Activated B cell treated with CpG ODN at 0.5 μM for 24 hours (primary cell): ENCODE measurements at regions of chr5 and their contacts with region 1.

Region 1: DNA sequence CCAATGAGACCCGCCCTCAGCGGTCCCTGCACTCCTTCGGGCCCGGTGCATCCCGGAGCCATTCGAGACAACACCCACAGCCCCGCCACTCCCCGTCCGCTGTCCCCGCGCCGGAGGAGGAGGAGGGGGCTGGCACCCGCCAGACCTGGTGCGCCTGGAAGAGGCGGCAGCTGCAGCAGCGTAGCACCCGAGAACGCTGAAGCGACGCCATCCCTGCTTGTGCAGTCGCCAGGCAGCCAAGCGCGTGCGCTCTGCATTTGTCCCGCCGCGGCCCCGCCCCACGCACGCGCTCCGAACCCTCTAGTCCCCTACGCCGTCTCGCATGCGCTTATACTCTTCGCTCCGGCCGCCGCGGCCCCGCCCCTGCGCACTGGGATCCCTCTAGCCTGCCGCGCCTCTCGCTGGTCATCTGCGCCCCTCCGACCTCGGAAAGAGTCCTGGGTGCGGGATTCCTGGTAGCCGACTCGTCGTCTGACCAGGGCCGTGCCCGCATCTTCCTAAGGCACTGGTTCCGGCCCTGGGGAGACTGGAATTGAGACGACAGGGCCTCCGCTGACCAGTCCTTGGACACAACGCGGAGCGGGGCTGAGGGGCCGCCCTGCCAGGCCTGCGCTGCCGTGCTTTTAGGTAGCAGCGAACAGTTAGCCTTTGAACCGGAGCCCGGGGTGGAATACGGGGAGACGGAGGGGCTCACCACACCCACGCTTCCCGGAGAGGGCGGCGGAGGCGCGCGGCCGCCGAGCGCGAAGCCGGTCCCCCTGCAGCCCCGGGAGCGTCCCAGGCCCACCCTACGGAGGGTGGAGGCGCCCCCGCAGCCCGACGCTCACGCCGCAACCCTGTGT is at the start of gene MRNIP:
- DNase-seq: peak; percentile 92
- ATAC-seq: peak; percentile 94
- H3K4me3 Mint-ChIP-seq: peak within 1 kb of the TSS; percentile 96
- H3K27ac Mint-ChIP-seq: peak within 1 kb of the TSS; percentile 89
- H3K4me1 Mint-ChIP-seq: peaks cover 33% of the 10 kb centered on the region
- H3K27me3 Mint-ChIP-seq: no peaks in the 10 kb centered on the region
- CTCF ChIP-seq: no peak
- total RNA-seq, gene MRNIP: 54.6 and 70.0 TPM in 2 replicates

Region 2: DNA sequence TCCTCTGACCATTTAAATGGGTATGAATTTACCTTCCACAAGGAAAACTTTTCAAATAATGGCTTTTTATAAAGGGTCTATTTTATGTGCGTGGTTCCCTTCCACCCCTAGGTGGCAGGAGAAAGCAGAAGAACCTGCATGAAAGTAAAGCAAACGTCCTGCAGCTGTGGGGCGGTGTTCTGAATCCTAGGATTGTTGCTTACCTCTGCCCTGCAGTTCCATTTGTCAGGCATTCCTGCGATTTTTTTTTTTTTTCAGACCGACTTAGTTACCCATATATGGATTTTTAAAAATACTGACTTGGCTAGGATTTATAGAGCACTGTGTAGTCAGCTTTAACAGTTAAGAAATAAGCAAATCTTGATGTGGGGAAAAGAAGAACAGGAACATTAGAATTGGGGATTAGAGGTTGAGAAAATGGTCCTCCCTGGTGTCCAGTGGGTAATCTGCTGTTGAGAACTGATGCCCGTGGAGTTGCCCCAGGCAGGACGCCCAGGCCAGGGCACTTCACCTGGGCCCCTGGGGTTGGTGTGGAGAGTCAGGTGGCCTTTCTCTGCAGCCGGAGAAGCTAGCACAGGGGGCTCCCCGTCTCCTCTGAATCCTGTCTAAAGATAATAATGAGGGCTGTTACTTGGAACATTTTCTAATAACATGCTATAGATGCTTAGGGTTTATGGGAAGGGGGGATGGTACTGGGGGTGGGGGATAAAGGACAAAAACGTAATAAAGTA is 95.4 kb before region 1 on chr5:
- CTCF ChIA-PET with region 1: no interaction called
- POLR2A ChIA-PET with region 1: no interaction called
- intact Hi-C with region 1: loop called (anchors 1 kb)
- DNase-seq: no peak
- ATAC-seq: peak; percentile 71
- H3K4me3 Mint-ChIP-seq: no peak overlapping the region
- H3K27ac Mint-ChIP-seq: no peak overlapping the region
- H3K4me1 Mint-ChIP-seq: peaks cover 51% of the 10 kb centered on the region
- H3K27me3 Mint-ChIP-seq: no peaks in the 10 kb centered on the region
- CTCF ChIP-seq: peak; percentile 74

Region 3: DNA sequence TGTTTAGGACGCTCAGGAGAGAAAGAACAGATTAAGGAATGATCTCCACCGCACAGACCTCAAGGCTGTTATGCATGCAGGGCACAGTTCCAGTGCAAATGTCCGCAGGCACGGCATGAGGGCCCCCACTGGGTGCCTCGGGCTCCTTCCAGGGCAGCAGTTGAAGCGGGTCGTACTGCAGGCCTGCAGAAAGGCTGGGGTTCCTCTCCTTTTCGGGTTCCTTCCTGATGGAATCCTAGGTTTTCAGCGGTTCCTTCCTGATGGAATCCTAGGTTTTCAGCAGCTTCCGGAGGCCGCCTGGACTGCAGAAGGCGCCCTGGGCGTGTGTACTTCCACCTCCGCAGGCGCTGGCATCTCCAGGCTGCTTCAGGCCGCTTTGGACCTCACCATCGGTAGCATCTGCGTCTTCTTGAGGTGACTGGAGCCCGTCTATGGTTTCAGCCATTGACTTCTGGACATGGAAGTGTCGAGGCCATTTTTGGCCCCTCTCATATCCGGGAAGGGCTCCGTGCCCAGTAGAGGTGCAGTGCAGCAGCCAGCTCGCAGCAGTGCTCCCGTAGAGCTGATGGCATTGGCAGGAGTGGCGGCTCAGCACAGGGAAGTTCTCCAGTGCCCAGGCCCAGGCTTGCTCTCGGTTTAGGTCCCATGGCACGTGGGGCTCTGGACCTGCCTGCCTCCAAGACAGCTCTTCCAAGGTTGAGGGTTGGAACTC is 46.5 kb before region 1 on chr5:
- CTCF ChIA-PET with region 1: no interaction called
- POLR2A ChIA-PET with region 1: no interaction called
- intact Hi-C with region 1: no loop called
- DNase-seq: no peak
- ATAC-seq: no peak
- H3K4me3 Mint-ChIP-seq: no peak overlapping the region
- H3K27ac Mint-ChIP-seq: no peak overlapping the region
- H3K4me1 Mint-ChIP-seq: peaks cover 13% of the 10 kb centered on the region
- H3K27me3 Mint-ChIP-seq: no peaks in the 10 kb centered on the region
- CTCF ChIP-seq: no peak

Region 4: GRCh38 chr5:179836225-179837019 is 22.4 kb before region 1 on chr5:
- CTCF ChIA-PET with region 1: interaction called, 3 read pairs
- POLR2A ChIA-PET with region 1: interaction called, 5 read pairs
- intact Hi-C with region 1: loop called (anchors 1 kb)
- DNase-seq: no peak
- ATAC-seq: peak; percentile 92
- H3K4me3 Mint-ChIP-seq: no peak overlapping the region
- H3K27ac Mint-ChIP-seq: peak overlapping the region; percentile 63
- H3K4me1 Mint-ChIP-seq: peaks cover 15% of the 10 kb centered on the region
- H3K27me3 Mint-ChIP-seq: no peaks in the 10 kb centered on the region
- CTCF ChIP-seq: no peak

Region 5: DNA sequence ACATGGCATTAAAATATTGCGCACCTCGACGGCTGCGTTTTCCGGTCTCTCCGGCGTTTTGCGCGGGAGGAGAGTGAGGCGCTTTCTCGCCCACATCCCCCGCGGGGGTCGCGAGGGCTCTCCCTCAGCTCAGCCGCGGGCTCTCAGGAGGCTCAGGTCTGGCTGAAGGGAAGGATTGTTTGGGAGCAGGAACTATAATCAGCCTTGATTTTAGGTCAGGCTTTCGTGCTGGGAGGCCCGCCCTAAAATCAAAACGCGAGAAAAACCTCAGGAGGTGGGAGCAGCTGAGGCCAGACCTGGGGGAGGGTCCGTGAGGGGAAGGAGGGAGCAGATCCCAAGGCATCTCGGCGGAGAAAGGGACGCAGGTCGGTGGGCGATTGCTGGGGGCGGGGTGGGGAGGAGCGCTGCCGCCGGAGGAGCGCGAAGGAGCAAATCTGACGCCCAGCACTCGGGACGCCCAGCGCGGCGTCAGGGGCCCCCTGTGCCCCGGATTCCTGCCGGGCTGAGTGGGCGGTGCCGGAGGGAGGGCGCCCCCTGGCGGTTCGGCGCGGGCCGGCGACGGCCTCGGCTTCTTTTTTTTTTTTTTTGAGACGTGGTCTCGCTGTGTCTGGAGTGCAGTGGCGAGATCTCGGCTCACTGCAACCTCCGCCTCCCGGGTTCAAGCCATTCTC is 231.4 kb after region 1 on chr5:
- CTCF ChIA-PET with region 1: no interaction called
- POLR2A ChIA-PET with region 1: no interaction called
- intact Hi-C with region 1: loop called (anchors 2 kb)
- DNase-seq: peak; percentile 85
- ATAC-seq: peak; percentile 91
- H3K4me3 Mint-ChIP-seq: peak overlapping the region; percentile 86
- H3K27ac Mint-ChIP-seq: peak overlapping the region; percentile 56
- H3K4me1 Mint-ChIP-seq: peaks cover 15% of the 10 kb centered on the region
- H3K27me3 Mint-ChIP-seq: peaks cover 8% of the 10 kb centered on the region
- CTCF ChIP-seq: no peak

Region 6: DNA sequence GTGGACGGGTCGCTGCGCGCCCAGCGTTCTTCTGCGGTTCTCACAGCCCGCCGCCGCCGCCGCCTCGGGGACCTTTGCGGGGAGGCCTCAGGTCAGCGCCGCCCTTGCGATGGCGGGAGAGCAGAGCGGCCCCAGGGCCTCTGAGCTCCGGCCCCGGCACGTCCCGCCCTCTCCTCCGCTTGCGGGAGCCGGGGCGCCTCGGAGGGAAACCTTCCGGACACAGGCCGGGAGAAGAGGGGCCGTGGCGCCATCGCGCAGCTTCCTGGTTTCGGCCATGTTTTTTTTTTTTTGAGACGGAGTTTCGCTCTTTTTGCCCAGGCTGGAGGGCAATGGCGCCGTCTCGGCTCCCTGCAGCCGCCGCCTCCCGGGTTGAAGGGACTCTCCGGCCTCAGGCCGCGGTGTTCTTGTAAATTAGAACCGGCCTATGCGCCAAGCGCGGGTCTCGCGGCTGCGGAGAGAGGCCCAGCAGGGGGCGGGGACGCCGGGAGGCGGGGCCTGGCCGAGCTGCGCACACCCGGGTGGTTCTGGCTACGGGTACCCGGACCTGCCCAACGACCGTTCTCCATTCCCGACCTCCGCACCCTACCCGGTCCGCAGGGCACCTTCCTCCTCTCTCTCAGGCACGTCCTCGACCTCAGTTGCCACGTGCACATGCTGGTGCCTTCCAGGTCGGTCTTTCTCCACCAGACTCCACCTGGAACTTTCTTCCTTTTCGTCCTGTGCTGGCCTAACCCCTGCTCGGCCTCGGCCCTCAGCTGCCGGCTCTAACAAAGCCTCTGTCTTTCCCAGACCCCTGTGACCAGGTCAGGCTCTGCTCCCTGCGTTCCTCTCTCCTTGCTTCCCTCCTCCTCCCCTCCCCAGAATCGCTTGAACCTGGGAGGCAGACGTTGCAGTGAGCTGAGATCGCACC is 972.6 kb after region 1 on chr5:
- CTCF ChIA-PET with region 1: no interaction called
- POLR2A ChIA-PET with region 1: no interaction called
- intact Hi-C with region 1: no loop called
- DNase-seq: peak; percentile 82
- ATAC-seq: peak; percentile 83
- H3K4me3 Mint-ChIP-seq: peak overlapping the region; percentile 98
- H3K27ac Mint-ChIP-seq: peak overlapping the region; percentile 98
- H3K4me1 Mint-ChIP-seq: peaks cover 54% of the 10 kb centered on the region
- H3K27me3 Mint-ChIP-seq: no peaks in the 10 kb centered on the region
- CTCF ChIP-seq: no peak